ENCODE measurements at regions of chr22 and their contacts with region 1.

Region 1: GRCh38 chr22:38569972-38570778 is at the start of gene DMC1:
- DNase-seq: peak; percentile 93 to 97
- ATAC-seq: peak; percentile 96
- total RNA-seq, gene DMC1: 0.87 to 1.2 TPM

Region 2: GRCh38 chr22:38051900-38052862 is 518.0 kb before region 1 on chr22:
- intact Hi-C with region 1: loop called in 1 of 2 experiments (anchors 10 kb)
- DNase-seq: peak; percentile 59 to 89
- ATAC-seq: peak; percentile 70

Measured in left colon (tissue), 2 donors.